Kidney (tissue), 22 donors: ENCODE measurements at regions of chr20 and their contacts with region 1.

Region 1: GRCh38 chr20:24992487-24993205 is at the start of gene APMAP:
- DNase-seq: peak; percentile 95 to 99 (median 97)
- H3K4me3 ChIP-seq: peak within 1 kb of the TSS; percentile 71 to 94 (median 86)
- H3K27ac ChIP-seq: peak within 1 kb of the TSS; percentile 92 to 95
- H3K4me1 ChIP-seq: peaks cover 0 to 12% (median 6%) of the 10 kb centered on the region in 3 donors
- H3K27me3 ChIP-seq: no peaks in the 10 kb centered on the region
- CTCF ChIP-seq: no peak
- total RNA-seq, gene APMAP: 90.9 TPM

Region 2: GRCh38 chr20:24880356-24880755 is 112.3 kb before region 1 on chr20:
- intact Hi-C with region 1: no loop called
- DNase-seq: no peak
- H3K4me3 ChIP-seq: no peak overlapping the region
- H3K27ac ChIP-seq: no peak overlapping the region
- H3K4me1 ChIP-seq: no peaks in the 10 kb centered on the region
- H3K27me3 ChIP-seq: no peaks in the 10 kb centered on the region
- CTCF ChIP-seq: no peak

Region 3: DNA sequence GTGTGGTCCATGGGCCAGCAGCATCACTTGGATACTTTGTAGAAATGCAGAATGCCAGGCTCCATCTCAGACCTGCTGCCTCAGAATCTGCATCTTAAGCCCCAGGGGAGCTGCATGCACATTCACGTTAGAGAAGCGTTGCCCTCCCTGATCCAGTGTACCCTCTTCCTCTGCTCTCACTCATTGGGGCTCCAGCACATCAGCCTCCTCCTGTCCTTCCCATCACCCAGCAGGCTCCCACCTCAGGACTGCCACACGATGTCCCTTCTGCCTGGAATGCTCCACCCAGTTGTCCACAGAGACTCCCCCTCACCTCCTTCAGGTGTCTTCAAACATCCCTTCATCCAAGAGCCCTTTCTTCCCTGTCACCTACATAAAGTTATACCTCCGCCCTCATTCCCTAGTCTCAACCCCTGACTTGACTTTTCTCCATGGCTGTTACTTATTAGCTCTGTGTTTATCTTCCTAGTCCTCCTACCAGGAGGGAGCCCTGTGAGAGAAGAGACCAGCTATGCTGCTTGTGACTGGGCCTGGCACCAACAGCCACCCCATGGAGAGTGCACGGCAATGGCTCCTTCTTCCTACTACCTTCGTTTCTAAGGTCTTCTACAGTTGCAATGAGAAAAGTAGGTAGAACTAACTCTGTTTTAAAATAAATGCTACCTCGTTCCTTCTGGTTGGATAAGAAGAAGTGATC is 68.6 kb after region 1 on chr20:
- intact Hi-C with region 1: loop called (anchors 5 kb)
- DNase-seq: peak in 2 of 5 donors; percentile 18 to 32
- H3K4me3 ChIP-seq: no peak overlapping the region
- H3K27ac ChIP-seq: no peak overlapping the region
- H3K4me1 ChIP-seq: peaks cover 0 to 21% (median 6%) of the 10 kb centered on the region in 3 donors
- H3K27me3 ChIP-seq: peaks cover 3% of the 10 kb centered on the region
- CTCF ChIP-seq: no peak

Region 4: GRCh38 chr20:25178563-25179438 is 186.2 kb after region 1 on chr20:
- intact Hi-C with region 1: loop called (anchors 10 kb)
- DNase-seq: peak in 2 of 5 donors; percentile 53 to 58
- H3K4me3 ChIP-seq: no peak overlapping the region
- H3K27ac ChIP-seq: no peak overlapping the region
- H3K4me1 ChIP-seq: peaks cover 0 to 2% (median 0%) of the 10 kb centered on the region in 3 donors
- H3K27me3 ChIP-seq: no peaks in the 10 kb centered on the region
- CTCF ChIP-seq: peak; percentile 69